Activated naive CD4-positive, alpha-beta T cell treated with anti-CD3 and anti-CD28 coated beads, Interleukin-2, amount 10 ng/mL, durations not matched to agents 7 days and 5 days (primary cell): ENCODE measurements at regions of chr16 and their contacts with region 1.

Region 1: DNA sequence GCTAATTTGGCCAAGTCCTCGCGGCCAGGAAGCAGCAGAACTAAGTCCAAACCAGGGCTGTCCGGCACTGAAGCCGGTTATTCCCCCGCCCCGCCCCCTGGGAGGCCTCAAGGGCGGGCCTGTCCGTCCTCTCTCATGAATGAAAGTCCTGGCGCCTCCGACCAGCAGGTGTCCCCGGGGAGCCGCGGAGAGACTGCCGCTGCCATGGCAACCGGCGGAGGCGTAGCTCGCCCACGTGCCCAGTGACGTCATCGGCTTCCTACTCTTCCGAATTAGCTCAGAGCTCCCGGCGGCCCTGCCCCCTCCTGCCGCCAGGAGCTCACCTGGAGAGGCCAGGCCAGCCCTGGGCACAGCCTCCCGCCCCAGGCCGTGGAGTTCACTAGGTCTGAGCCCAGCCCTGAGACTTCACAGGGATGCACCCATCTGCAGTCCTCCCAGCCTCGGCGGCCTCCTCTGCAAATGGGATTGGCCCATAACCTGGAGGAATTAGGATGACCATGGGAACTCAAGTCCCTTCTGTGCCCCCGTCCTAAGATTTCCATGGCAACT is 1.3 kb downstream of the SPATA2L start:
- DNase-seq: peak; percentile 97
- H3K4me3 Mint-ChIP-seq: peak overlapping the region; percentile 77
- H3K27ac Mint-ChIP-seq: peak overlapping the region; percentile 76
- H3K4me1 Mint-ChIP-seq: peaks cover 34% of the 10 kb centered on the region
- H3K27me3 Mint-ChIP-seq: peaks cover 6% of the 10 kb centered on the region

Region 2: DNA sequence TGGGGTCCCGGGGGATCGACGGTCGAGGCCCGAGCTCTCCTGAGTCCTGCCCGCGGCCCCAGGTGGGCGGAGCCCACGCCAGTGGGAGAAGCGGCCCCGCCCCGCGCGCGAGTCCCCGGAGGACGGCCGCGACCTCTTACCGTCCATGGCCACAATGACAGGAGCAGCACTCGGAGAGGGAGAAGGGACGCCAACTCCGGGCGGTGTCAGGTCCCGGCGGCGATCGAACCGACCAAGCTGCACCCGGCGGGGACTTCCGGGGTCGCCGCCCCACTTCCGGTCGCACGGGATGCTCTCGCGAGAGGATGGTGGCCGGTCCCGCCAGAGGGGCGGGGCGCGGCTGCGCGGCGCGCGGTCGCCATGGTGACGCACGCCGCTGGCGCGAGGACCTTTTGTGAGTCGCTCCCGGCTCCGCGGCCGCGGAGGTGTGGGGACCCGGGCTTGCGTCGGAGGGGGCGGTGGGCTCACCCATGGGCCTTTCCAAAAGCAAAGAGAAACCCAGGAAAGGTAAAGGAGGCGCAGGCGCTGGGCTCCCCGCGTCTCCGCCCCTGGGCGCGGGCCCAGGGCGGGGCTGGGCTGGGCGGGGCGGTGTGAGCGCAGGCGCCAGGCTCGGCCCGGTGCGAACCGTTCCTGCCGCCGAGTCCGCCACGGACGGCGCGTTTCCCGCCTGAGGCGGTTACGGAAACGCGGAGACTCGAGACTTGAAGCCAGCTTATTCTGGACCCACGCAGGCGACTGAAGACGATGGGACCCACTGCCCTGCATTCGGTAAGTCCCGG is 42.5 kb before region 1 on chr16 and contains the starts of genes CHMP1A and SPATA33:
- CTCF ChIA-PET with region 1: interaction called, 13 read pairs
- DNase-seq: peak; percentile 93
- H3K4me3 Mint-ChIP-seq: peak within 1 kb of the TSS; percentile 93
- H3K27ac Mint-ChIP-seq: peak within 1 kb of the TSS; percentile 84
- H3K4me1 Mint-ChIP-seq: peaks cover 42% of the 10 kb centered on the region
- H3K27me3 Mint-ChIP-seq: no peaks in the 10 kb centered on the region

Region 3: DNA sequence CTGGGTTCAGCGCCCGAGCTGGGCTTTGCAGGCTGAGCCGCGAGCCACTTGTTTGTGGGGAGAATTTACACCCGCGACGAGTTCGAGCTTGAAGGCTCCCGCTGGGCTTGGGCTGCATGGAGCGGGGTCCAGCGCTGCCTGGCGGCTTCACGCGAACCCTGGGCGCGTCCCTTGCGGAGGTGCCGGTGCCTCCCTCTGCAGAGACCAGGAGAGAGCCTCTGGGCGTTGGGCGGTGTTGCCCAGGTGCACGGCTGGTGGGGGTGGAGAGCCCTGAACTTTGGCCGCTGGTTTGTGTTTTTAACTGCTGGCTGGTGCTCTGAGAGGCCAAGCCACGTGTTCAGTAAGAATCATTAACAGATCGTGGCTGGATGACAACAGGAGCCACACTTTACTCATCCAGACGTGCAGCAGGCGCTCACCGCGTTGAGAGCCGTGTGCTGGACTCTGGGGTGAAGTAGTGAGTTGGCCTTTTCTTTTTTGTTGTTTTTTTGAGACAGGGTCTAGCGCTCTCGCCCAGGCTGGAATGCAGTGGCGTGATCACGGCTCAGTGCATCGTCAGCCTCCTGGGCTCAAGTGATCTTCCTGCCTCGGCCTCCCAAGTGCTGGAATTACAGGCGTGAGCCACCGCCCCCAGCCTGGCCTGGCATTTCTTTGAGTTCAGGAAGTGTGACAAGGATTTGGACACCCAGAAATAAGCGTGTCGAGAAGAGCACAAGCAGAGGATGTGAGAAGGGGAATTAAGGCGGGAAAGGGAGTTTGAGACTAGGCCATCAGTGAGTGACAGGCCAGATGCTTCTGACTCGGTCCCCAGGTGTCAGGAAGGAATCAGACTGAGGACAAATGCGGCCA is 12.9 kb before region 1 on chr16:
- CTCF ChIA-PET with region 1: interaction called, 18 read pairs
- DNase-seq: no peak
- H3K4me3 Mint-ChIP-seq: peak overlapping the region; percentile 92
- H3K27ac Mint-ChIP-seq: peak overlapping the region; percentile 82
- H3K4me1 Mint-ChIP-seq: peaks cover 21% of the 10 kb centered on the region
- H3K27me3 Mint-ChIP-seq: no peaks in the 10 kb centered on the region

Region 4: DNA sequence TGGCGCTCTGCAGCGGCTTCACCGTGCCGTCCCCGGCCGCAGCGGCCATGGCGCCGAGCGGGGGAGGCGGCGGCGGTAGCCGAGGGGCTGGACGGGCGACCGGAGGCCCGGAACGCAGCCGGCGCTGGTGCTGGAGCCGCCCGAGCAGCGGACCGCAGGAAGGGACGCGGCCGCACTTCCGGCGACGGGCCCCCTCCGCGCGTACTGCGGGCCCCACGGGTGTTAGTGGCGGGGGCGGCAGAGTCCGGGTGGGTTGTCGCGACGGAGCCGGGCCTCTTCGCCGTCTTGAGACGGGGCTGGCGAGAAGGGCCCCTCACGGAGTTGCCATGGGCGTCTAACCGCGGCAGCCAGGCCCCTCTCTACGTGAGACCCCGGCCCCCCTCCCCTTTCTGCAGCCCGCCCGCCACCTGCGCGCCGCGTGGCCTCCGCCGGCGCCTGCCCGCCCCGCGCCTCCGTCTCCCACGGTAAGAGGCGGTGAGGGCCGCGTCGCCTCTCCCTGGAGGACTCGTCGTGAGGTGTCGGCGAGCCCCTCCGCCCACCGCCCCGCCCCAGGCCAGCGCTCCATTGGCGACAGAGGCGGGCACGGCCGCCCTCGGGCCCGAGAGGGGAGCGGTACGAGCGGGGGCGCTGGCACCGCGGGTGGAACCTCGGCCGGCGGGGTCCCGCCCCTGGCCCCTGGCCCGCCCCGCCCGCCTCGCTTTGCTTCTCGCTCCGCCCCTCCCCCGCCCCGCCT is 20.8 kb after region 1 on chr16 and contains the starts of genes VPS9D1 and ZNF276:
- CTCF ChIA-PET with region 1: interaction called, 14 read pairs
- DNase-seq: peak; percentile 89
- H3K4me3 Mint-ChIP-seq: peak within 1 kb of the TSS; percentile 91
- H3K27ac Mint-ChIP-seq: peak within 1 kb of the TSS; percentile 98
- H3K4me1 Mint-ChIP-seq: peaks cover 39% of the 10 kb centered on the region
- H3K27me3 Mint-ChIP-seq: peaks cover 9% of the 10 kb centered on the region

Region 5: DNA sequence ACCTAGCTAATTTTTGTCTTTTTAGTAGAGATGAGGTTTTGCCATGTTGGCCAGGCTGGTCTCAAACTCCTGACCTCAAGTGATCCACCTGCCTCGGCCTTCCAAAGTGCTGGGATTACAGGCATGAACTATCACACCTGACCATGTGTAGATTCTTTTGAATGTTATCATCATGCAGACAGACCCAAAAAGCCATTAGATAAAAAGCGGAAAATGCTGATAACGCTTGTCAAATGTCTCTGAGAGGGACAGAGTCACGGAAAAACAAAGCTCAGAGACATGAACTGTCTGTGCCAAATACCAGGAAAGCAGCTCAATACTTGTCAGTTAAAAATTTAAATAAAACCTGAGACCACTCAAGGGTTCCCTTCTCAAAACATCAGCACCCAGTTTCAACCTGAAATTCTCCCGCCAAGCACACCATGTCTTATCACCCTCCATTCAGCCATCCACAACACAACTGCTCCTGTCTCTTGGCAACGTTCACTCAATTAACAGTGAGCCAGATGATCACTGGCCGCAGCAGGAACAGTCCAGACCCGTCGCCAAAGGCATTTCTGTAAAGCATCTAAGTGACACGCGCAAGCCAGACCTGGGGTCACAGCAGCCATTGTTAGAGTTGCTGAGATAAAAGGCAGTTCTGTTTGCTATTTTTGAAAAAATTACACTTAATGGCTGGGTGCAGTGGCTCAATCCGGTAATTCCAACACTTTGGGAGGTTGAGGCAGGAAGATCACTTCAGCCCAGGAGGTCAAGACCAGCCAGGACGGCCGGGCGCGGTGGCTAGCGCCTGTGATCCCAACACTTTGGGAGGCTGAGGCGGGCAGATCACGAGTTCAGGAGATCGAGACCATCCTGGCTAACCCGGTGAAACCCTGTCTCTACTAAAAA is 86.5 kb after region 1 on chr16:
- CTCF ChIA-PET with region 1: interaction called, 116 read pairs
- DNase-seq: no peak
- H3K4me3 Mint-ChIP-seq: no peak overlapping the region
- H3K27ac Mint-ChIP-seq: peak overlapping the region; percentile 67
- H3K4me1 Mint-ChIP-seq: peaks cover 33% of the 10 kb centered on the region
- H3K27me3 Mint-ChIP-seq: no peaks in the 10 kb centered on the region

Region 6: GRCh38 chr16:89860747-89861304 is 160.7 kb after region 1 on chr16:
- CTCF ChIA-PET with region 1: interaction called, 57 read pairs
- DNase-seq: peak; percentile 83
- H3K4me3 Mint-ChIP-seq: no peak overlapping the region
- H3K27ac Mint-ChIP-seq: no peak overlapping the region
- H3K4me1 Mint-ChIP-seq: peaks cover 46% of the 10 kb centered on the region
- H3K27me3 Mint-ChIP-seq: peaks cover 25% of the 10 kb centered on the region

Region 7: GRCh38 chr16:89909777-89910716 is 209.9 kb after region 1 on chr16:
- CTCF ChIA-PET with region 1: interaction called, 29 read pairs
- DNase-seq: peak; percentile 76
- H3K4me3 Mint-ChIP-seq: no peak overlapping the region
- H3K27ac Mint-ChIP-seq: no peak overlapping the region
- H3K4me1 Mint-ChIP-seq: peaks cover 4% of the 10 kb centered on the region
- H3K27me3 Mint-ChIP-seq: no peaks in the 10 kb centered on the region